Naive thymus-derived CD4-positive, alpha-beta T cell (primary cell): ENCODE measurements at regions of chr2 and their contacts with region 1.

Region 1: DNA sequence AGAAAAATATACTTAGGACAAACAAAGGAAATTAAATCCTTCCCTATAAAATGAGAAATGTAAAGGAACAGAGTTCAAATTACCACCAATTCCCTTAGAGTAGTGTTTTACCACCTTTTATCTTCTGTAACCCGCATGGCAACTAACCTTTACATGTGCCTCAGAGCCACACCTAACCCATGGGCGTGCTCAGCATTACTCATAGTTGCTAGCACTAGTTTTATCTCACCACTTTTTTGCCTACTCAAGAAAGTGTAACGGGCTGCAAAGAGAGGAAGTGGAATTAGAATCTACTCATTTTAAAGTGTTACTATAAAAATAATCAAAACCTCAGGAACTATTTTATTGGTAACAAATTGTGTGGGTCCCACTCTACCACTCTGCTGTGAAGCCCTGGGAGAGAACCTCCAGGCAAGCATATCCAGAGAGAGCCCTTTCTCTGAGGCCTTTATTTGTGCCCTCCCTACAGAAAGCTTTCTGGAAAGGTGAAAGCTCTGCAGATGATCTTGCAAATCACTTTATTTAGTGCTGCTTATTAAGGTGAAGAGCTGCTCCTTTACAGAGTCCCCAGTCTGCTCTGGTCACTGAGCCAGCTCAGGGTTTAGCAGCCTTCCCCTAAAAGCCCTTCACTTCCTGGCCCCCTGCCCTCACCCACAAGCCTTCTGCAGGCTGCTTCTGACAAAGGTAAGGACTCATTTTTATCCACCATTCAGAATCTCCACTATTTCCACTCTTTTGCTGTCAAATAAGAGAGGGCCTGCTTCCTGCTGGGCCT is 98.8 kb downstream of the TRABD2A start:
- DNase-seq: peak in 8 of 9 donors; percentile 29 to 72 (median 57)
- ATAC-seq: peak; percentile 87
- H3K4me3 ChIP-seq: peak overlapping the region; percentile 18
- H3K4me3 Mint-ChIP-seq: peak overlapping the region in 9 of 10 donors; percentile 54 to 85 (median 73)
- H3K27ac ChIP-seq: peak overlapping the region; percentile 64
- H3K27ac Mint-ChIP-seq: peak overlapping the region; percentile 84 to 96 (median 91)
- H3K4me1 ChIP-seq: peaks cover 52 to 75% of the 10 kb centered on the region in 2 donors
- H3K4me1 Mint-ChIP-seq: peaks cover 50 to 92% (median 87%) of the 10 kb centered on the region in 7 donors
- H3K27me3 ChIP-seq: no peaks in the 10 kb centered on the region
- H3K27me3 Mint-ChIP-seq: no peaks in the 10 kb centered on the region

Region 2: DNA sequence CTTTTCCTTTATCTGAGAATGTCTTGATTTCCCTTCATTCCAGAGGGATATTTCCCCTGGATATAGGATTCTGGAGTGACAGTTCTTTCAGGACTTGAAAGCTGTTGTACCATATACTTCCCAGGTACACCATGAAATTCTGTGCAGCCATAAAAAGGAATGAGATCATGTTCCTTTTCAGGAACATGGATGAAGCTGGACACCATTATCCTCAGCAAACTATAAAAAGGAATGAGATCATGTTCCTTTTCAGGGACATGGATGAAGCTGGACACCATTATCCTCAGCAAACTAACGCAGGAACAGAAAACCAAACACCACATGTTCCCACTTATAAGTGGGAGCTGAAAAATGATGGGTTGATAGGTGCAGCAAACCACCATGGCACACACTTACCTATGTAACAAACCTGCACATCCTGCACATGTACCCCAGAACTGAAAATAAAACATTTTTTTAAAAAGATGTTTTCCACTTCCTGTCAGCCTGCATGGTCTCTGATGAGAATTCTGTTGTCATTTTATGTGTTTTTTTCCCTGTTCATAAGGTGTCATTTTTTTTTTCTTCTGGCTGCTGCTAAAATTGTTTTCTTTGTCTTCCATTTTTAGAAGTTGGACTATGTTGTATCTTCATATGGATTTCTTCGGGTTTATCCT is 132.5 kb before region 1 on chr2:
- CTCF ChIA-PET with region 1: no interaction called
- POLR2A ChIA-PET with region 1: interaction called, 3 read pairs
- intact Hi-C with region 1: loop called (anchors 2 to 5 kb)
- DNase-seq: peak in 7 of 9 donors; percentile 16 to 63 (median 49)
- ATAC-seq: no peak
- H3K4me3 ChIP-seq: no peak overlapping the region
- H3K4me3 Mint-ChIP-seq: peak overlapping the region; percentile 27 to 78 (median 58)
- H3K27ac ChIP-seq: no peak overlapping the region
- H3K27ac Mint-ChIP-seq: peak overlapping the region; percentile 2 to 92 (median 78)
- H3K4me1 ChIP-seq: peaks cover 21 to 83% of the 10 kb centered on the region in 2 donors
- H3K4me1 Mint-ChIP-seq: peaks cover 52 to 93% (median 89%) of the 10 kb centered on the region in 7 donors
- H3K27me3 ChIP-seq: no peaks in the 10 kb centered on the region
- H3K27me3 Mint-ChIP-seq: peaks cover 0 to 2% (median 0%) of the 10 kb centered on the region in 5 donors

Region 3: GRCh38 chr2:84766791-84767190 is 15.3 kb before region 1 on chr2:
- CTCF ChIA-PET with region 1: no interaction called
- POLR2A ChIA-PET with region 1: interaction called, 6 read pairs
- intact Hi-C with region 1: loop called in 1 of 2 experiments (anchors 2 kb)
- DNase-seq: no peak
- ATAC-seq: no peak
- H3K4me3 ChIP-seq: no peak overlapping the region
- H3K4me3 Mint-ChIP-seq: no peak overlapping the region
- H3K27ac ChIP-seq: no peak overlapping the region
- H3K27ac Mint-ChIP-seq: no peak overlapping the region
- H3K4me1 ChIP-seq: no peaks in the 10 kb centered on the region
- H3K4me1 Mint-ChIP-seq: peaks cover 0 to 26% (median 11%) of the 10 kb centered on the region in 7 donors
- H3K27me3 ChIP-seq: no peaks in the 10 kb centered on the region
- H3K27me3 Mint-ChIP-seq: peaks cover 0 to 7% (median 0%) of the 10 kb centered on the region in 5 donors

Region 4: DNA sequence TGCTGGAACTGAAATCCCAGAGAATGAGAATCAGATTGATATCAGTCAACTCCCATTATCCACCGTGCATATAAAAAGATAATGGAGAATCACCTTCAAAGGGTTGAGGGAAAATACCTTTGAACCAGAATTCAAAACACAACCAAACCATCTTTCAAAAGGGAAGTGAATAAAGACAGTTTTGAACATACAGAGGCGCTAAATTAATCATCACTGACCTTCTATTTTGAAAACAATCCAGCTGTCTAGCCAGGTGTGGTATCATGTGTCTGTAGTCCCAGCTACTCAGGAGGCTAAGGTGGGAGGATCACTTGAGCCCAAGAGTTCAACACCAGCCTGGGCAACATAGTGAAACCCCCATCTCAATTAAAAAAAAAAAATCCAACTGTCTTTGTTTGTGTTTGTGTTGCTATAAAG is 35.1 kb after region 1 on chr2:
- CTCF ChIA-PET with region 1: interaction called, 3 read pairs
- POLR2A ChIA-PET with region 1: interaction called, 3 read pairs
- intact Hi-C with region 1: loop called (anchors 5 kb)
- DNase-seq: no peak
- ATAC-seq: no peak
- H3K4me3 ChIP-seq: no peak overlapping the region
- H3K4me3 Mint-ChIP-seq: peak overlapping the region in 7 of 10 donors; percentile 5 to 58 (median 43)
- H3K27ac ChIP-seq: peak overlapping the region; percentile 12
- H3K27ac Mint-ChIP-seq: peak overlapping the region in 8 of 9 donors; percentile 20 to 89 (median 81)
- H3K4me1 ChIP-seq: peaks cover 7 to 55% of the 10 kb centered on the region in 2 donors
- H3K4me1 Mint-ChIP-seq: peaks cover 22 to 92% (median 61%) of the 10 kb centered on the region in 7 donors
- H3K27me3 ChIP-seq: no peaks in the 10 kb centered on the region
- H3K27me3 Mint-ChIP-seq: no peaks in the 10 kb centered on the region

Region 5: DNA sequence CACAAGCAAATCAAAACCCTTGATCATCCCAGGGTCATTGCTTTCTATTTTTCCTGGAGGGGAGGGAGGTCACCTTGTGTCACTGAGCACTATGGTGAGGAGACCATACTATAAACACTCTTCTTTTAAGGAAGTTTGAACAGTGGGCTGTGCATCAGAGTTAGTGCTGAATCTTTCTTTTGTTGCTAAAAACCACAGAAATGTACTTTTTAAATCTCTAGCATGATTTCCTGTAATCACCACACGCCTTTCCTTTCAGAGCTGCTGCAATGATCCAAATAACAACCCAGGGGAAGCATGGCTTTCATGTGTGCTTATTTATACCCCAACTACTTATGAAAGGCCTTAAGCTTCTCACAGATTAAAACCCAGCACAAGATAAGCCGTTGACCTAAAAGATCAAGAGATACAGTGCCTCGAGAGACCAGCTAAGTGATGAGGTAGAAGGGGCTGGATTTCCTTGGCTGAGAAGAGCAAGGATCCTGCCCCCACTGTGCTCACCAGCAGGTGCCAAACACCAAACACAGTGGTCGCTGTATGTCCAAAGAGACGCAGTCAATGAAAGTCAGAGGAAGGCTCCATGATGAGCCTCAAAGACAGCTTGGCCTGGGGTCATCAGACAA is 64.0 kb after region 1 on chr2:
- CTCF ChIA-PET with region 1: interaction called, 3 read pairs
- POLR2A ChIA-PET with region 1: interaction called, 39 read pairs
- intact Hi-C with region 1: loop called (anchors 1 to 5 kb)
- DNase-seq: peak in 7 of 9 donors; percentile 68 to 89 (median 84)
- ATAC-seq: peak; percentile 85
- H3K4me3 ChIP-seq: peak overlapping the region; percentile 14
- H3K4me3 Mint-ChIP-seq: peak overlapping the region; percentile 72 to 87 (median 82)
- H3K27ac ChIP-seq: peak overlapping the region; percentile 80
- H3K27ac Mint-ChIP-seq: peak overlapping the region in 8 of 9 donors; percentile 94 to 99 (median 97)
- H3K4me1 ChIP-seq: peaks cover 93 to 98% of the 10 kb centered on the region in 2 donors
- H3K4me1 Mint-ChIP-seq: peaks cover 77 to 100% (median 92%) of the 10 kb centered on the region in 7 donors
- H3K27me3 ChIP-seq: no peaks in the 10 kb centered on the region
- H3K27me3 Mint-ChIP-seq: no peaks in the 10 kb centered on the region